Activated B cell treated with CpG ODN at 0.5 μM for 24 hours (primary cell): ENCODE measurements at regions of chr17 and their contacts with region 1.

Region 1: GRCh38 chr17:80426681-80427326 is 11.8 kb downstream of the ENDOV start:
- DNase-seq: peak; percentile 87
- ATAC-seq: peak; percentile 97
- H3K4me3 Mint-ChIP-seq: no peak overlapping the region
- H3K27ac Mint-ChIP-seq: no peak overlapping the region
- H3K4me1 Mint-ChIP-seq: peaks cover 29% of the 10 kb centered on the region
- H3K27me3 Mint-ChIP-seq: no peaks in the 10 kb centered on the region
- CTCF ChIP-seq: peak; percentile 79

Region 2: GRCh38 chr17:80374732-80375585 is 51.8 kb before region 1 on chr17:
- CTCF ChIA-PET with region 1: no interaction called
- POLR2A ChIA-PET with region 1: no interaction called
- intact Hi-C with region 1: no loop called
- DNase-seq: no peak
- ATAC-seq: no peak
- H3K4me3 Mint-ChIP-seq: no peak overlapping the region
- H3K27ac Mint-ChIP-seq: no peak overlapping the region
- H3K4me1 Mint-ChIP-seq: no peaks in the 10 kb centered on the region
- H3K27me3 Mint-ChIP-seq: no peaks in the 10 kb centered on the region
- CTCF ChIP-seq: no peak

Region 3: GRCh38 chr17:80414803-80415625 is 11.8 kb before region 1 on chr17 and contains the start of gene ENDOV:
- CTCF ChIA-PET with region 1: interaction called, 4 read pairs
- POLR2A ChIA-PET with region 1: no interaction called
- intact Hi-C with region 1: loop called (anchors 1 kb)
- DNase-seq: peak; percentile 90
- ATAC-seq: peak; percentile 88
- H3K4me3 Mint-ChIP-seq: peak within 1 kb of the TSS; percentile 89
- H3K27ac Mint-ChIP-seq: peak within 1 kb of the TSS; percentile 81
- H3K4me1 Mint-ChIP-seq: peaks cover 26% of the 10 kb centered on the region
- H3K27me3 Mint-ChIP-seq: peaks cover 17% of the 10 kb centered on the region
- CTCF ChIP-seq: no peak
- total RNA-seq, gene ENDOV: 26.8 and 28.1 TPM in 2 replicates

Region 4: GRCh38 chr17:80575057-80575875 is 148.5 kb after region 1 on chr17:
- CTCF ChIA-PET with region 1: interaction called, 28 read pairs
- POLR2A ChIA-PET with region 1: no interaction called
- intact Hi-C with region 1: loop called (anchors 1 kb)
- DNase-seq: peak; percentile 81
- ATAC-seq: peak; percentile 100
- H3K4me3 Mint-ChIP-seq: no peak overlapping the region
- H3K27ac Mint-ChIP-seq: no peak overlapping the region
- H3K4me1 Mint-ChIP-seq: peaks cover 7% of the 10 kb centered on the region
- H3K27me3 Mint-ChIP-seq: no peaks in the 10 kb centered on the region
- CTCF ChIP-seq: peak; percentile 100

Region 5: DNA sequence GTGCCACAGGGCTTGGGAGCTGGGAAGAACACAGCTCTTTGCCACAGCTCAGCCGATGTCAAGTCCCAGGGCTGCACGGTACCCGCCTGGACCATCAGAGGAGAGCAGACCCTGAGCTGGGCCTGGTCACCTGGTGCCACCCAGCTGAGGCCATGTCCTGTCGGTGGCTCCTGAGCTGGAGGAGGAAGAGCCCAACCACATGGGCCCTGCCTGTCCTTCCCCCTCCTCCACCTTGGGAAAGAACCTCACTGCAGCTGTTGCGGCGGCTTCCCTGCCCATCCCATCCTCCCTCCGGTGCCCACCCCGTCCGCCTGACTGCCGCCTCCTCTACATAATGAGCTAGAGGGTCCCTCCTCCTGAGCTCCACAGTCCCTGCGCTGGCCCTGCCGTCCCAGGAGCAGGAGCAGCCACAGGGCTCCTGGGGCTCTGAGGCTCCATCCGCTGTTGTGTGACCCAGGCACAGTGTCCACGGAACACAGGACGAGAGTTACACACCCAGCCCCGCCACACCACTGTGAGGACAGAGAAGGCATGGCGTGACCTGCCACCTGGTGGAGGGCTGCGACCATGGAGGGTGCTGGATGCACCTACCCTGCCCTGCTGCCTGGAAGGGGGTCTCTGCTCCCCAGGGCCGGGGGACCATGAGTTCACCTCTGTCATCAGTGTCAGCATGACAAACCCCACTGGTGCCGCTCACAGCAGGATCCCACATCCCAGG is 543.4 kb after region 1 on chr17:
- CTCF ChIA-PET with region 1: interaction called, 52 read pairs
- POLR2A ChIA-PET with region 1: no interaction called
- intact Hi-C with region 1: loop called (anchors 1 kb)
- DNase-seq: peak; percentile 58
- ATAC-seq: peak; percentile 91
- H3K4me3 Mint-ChIP-seq: peak overlapping the region; percentile 41
- H3K27ac Mint-ChIP-seq: peak overlapping the region; percentile 24
- H3K4me1 Mint-ChIP-seq: peaks cover 19% of the 10 kb centered on the region
- H3K27me3 Mint-ChIP-seq: peaks cover 4% of the 10 kb centered on the region
- CTCF ChIP-seq: no peak

Region 6: DNA sequence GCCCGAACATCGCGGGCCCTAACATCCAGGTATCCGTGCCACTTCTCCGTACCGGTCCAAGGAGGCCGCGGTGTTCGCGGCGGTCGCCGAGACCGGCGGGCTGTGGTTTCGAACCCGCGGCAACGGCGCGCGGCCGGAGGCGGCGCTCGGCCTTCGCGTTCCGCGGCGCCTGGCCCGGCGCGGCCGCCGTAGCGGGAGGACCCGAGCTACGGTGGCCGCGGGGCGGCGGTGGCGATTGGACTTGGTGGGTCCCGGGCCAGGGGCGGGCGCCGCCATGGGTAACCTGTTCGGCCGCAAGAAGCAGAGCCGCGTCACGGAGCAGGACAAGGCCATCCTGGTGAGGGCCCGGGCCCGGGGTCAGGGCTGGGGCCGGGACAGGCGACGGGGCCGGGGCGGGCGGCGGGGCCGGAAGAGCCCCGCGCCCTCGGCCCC is 564.9 kb after region 1 on chr17 and contains the start of gene CHMP6:
- CTCF ChIA-PET with region 1: interaction called, 11 read pairs
- POLR2A ChIA-PET with region 1: no interaction called
- intact Hi-C with region 1: no loop called
- DNase-seq: peak; percentile 81
- ATAC-seq: peak; percentile 62
- H3K4me3 Mint-ChIP-seq: peak within 1 kb of the TSS; percentile 83
- H3K27ac Mint-ChIP-seq: peak within 1 kb of the TSS; percentile 50
- H3K4me1 Mint-ChIP-seq: peaks cover 43% of the 10 kb centered on the region
- H3K27me3 Mint-ChIP-seq: no peaks in the 10 kb centered on the region
- CTCF ChIP-seq: no peak
- total RNA-seq, gene CHMP6: 35.1 and 36.6 TPM in 2 replicates